CD4-positive, alpha-beta memory T cell (primary cell): ENCODE measurements at regions of chrX and their contacts with region 1.

Region 1: DNA sequence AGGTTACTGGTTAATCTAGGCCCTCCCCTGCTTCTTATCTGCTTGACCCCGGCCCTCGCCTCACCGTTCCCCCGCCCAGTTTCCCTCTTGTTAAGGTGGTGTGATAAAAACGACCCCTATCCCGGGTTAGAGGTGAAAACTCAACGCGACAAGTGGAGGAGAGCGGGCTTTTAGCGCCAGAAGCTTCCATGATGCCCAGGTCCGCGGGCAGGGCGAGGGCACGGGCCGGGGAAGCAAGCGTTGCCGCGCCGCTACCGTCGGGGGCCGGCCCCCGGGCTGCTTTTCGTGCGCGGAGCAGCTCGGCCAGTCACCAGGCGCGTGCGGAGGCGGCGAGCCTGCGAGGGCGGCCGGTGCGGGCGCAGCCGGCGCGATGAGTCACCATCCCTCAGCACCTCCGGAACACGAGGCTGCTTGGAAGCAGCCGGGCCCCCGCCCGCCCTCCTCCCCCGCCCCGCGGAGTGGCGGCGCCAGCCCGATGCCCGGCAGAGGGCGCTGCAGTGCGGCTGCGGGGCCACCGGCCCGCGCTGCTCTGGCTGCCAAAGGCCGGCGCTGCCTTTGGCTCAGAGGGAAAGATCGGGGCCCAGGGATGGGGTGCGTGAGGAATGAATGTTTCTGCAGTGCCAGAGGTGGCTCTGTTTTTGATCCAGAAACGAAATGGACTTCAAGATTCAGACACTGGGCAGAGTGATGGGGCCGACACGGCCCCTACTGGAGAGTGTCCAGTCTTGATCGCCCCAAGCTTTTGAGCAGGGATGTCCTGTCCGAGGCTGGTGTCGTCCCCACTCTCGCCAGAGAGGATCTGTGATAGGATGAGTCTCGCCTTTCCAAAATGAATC is 107.8 kb downstream of the NHSL2 start:
- DNase-seq: peak; percentile 76 to 85 (median 81)
- H3K4me3 ChIP-seq: no peak overlapping the region
- H3K4me3 Mint-ChIP-seq: peak overlapping the region in 5 of 8 donors; percentile 13 to 54 (median 44)
- H3K27ac ChIP-seq: no peak overlapping the region
- H3K27ac Mint-ChIP-seq: peak overlapping the region in 5 of 7 donors; percentile 51 to 83 (median 64)
- H3K4me1 ChIP-seq: peaks cover 30% of the 10 kb centered on the region
- H3K4me1 Mint-ChIP-seq: peaks cover 16 to 38% (median 24%) of the 10 kb centered on the region in 4 donors
- H3K27me3 ChIP-seq: no peaks in the 10 kb centered on the region
- H3K27me3 Mint-ChIP-seq: no peaks in the 10 kb centered on the region

Region 2: DNA sequence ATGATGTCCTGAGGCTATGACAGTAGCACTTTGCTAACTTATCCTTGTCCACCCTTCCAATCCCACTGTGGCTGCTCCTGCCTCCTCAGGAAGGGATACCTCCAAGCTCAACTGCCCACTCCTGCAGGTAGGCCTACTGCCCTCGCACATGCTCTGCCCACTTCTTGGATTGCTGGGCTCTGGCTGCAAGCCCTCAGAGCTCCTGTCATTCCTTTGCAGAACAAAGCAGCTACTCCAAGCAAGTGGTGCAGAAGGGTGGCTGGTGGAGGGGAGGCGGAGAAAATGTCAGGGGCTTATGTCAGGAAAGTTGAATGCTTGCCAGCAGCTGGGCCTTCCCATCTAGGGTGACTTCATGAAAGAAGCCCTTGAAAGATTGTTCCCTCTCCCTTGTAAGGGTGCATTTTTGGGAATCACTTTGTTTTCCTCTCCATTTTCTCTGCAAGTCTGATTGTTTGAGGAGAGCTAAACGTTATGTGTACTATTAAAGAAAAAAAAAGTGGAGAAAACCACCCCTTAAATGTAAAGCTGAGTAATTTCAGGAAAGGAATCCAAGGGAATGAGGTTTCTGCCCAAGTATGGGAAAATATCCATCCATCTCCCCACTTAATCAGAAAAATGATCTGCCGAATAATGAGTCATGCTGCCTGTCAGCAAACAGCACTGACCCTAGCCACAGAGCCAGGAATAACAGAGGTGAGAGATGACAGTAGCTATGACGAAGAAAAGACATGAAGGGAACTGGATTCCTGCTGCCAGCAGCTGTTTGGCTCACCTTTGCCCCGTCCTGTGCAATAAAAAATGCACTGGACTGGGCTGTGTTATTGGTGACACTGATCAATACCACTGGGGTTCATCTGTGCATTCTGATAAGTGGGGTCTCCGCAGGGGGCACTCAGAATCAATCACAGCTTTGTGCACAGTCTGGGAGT is 11.3 kb after region 1 on chrX:
- CTCF ChIA-PET with region 1: interaction called, 13 read pairs
- POLR2A ChIA-PET with region 1: interaction called, 3 read pairs
- intact Hi-C with region 1: no loop called
- DNase-seq: no peak
- H3K4me3 ChIP-seq: no peak overlapping the region
- H3K4me3 Mint-ChIP-seq: no peak overlapping the region
- H3K27ac ChIP-seq: no peak overlapping the region
- H3K27ac Mint-ChIP-seq: no peak overlapping the region
- H3K4me1 ChIP-seq: peaks cover 7% of the 10 kb centered on the region
- H3K4me1 Mint-ChIP-seq: peaks cover 3 to 7% (median 5%) of the 10 kb centered on the region in 4 donors
- H3K27me3 ChIP-seq: no peaks in the 10 kb centered on the region
- H3K27me3 Mint-ChIP-seq: no peaks in the 10 kb centered on the region

Region 3: DNA sequence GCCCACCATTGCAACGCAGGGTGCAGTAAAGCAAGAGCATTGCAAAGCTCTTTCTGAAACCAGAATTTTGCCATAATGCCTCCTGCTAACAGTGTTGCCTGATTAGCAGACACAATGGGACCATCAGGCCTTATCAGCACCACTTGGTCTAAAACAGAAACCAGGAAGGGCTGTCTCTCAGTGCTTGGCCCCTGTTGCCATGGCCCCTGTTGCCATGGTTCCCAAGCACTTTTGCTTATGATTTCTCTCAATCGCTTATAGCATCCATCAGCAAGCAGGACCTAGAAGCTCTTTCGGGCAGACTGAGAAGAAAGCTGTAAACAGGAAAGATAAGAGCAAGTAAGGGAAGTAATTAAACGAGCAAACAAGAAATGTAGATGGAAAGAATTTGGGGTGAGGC is 76.4 kb after region 1 on chrX:
- CTCF ChIA-PET with region 1: interaction called, 38 read pairs
- POLR2A ChIA-PET with region 1: interaction called, 14 read pairs
- intact Hi-C with region 1: loop called (anchors 2 kb)
- DNase-seq: peak; percentile 81 to 92 (median 86)
- H3K4me3 ChIP-seq: no peak overlapping the region
- H3K4me3 Mint-ChIP-seq: peak overlapping the region in 6 of 8 donors; percentile 5 to 61 (median 42)
- H3K27ac ChIP-seq: peak overlapping the region; percentile 69
- H3K27ac Mint-ChIP-seq: peak overlapping the region; percentile 69 to 97 (median 93)
- H3K4me1 ChIP-seq: peaks cover 37% of the 10 kb centered on the region
- H3K4me1 Mint-ChIP-seq: peaks cover 15 to 39% (median 28%) of the 10 kb centered on the region in 4 donors
- H3K27me3 ChIP-seq: no peaks in the 10 kb centered on the region
- H3K27me3 Mint-ChIP-seq: no peaks in the 10 kb centered on the region

Region 4: GRCh38 chrX:72121383-72121782 is 102.9 kb after region 1 on chrX:
- CTCF ChIA-PET with region 1: interaction called, 241 read pairs
- POLR2A ChIA-PET with region 1: interaction called, 48 read pairs
- intact Hi-C with region 1: loop called (anchors 1 kb)
- DNase-seq: peak; percentile 44 to 63 (median 46)
- H3K4me3 ChIP-seq: peak overlapping the region in 1 of 2 donors; percentile 9
- H3K4me3 Mint-ChIP-seq: peak overlapping the region; percentile 28 to 74 (median 58)
- H3K27ac ChIP-seq: peak overlapping the region; percentile 32
- H3K27ac Mint-ChIP-seq: peak overlapping the region; percentile 79 to 94 (median 88)
- H3K4me1 ChIP-seq: peaks cover 74% of the 10 kb centered on the region
- H3K4me1 Mint-ChIP-seq: peaks cover 40 to 81% (median 59%) of the 10 kb centered on the region in 4 donors
- H3K27me3 ChIP-seq: no peaks in the 10 kb centered on the region
- H3K27me3 Mint-ChIP-seq: no peaks in the 10 kb centered on the region

Region 5: DNA sequence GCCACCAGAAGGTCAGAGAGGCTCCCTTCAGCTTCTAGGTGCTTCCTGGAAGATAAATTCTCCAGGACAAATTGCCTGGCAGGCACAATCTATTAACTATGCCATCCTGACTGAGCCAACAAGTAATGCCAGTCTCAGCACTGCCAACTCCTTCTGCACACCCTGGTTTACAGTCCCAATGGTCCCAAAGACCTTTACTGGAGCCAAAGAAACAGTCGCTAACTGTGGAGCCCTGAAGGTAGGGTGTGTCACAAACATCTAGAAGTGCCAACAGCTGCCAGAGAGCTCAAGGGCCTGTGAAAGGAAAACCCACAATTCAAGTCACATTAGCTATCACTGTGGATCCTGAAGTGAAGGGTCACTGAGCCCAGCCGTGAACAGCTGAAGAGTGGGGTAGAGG is 322.1 kb after region 1 on chrX:
- CTCF ChIA-PET with region 1: no interaction called
- POLR2A ChIA-PET with region 1: no interaction called
- intact Hi-C with region 1: no loop called
- DNase-seq: no peak
- H3K4me3 ChIP-seq: no peak overlapping the region
- H3K4me3 Mint-ChIP-seq: no peak overlapping the region
- H3K27ac ChIP-seq: no peak overlapping the region
- H3K27ac Mint-ChIP-seq: no peak overlapping the region
- H3K4me1 ChIP-seq: no peaks in the 10 kb centered on the region
- H3K4me1 Mint-ChIP-seq: no peaks in the 10 kb centered on the region
- H3K27me3 ChIP-seq: no peaks in the 10 kb centered on the region
- H3K27me3 Mint-ChIP-seq: no peaks in the 10 kb centered on the region